Tibial artery (tissue), 4 donors: ENCODE measurements at regions of chrX and their contacts with region 1.

Region 1: DNA sequence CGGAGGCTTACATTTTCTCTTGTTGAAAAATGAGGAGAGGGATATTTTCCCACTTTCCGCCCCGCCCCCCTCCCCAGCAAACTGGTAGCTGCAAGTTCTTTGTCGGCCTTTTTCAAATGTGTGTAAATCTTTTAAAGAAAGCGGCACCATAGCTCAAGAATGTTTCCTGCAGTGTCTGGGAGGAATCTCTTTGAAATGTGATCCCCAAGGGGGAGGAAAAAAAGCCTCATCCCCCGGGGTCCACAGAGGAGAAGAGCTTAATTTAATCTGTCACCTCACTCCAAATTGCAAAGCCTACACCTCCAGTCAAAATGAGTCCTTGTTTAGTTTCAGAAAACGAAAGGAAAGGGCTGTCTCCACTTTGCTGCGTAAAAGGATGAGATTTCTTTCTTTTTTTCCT is 34.8 kb downstream of the ASMT start:
- DNase-seq: no peak
- H3K4me3 ChIP-seq: no peak overlapping the region
- H3K27ac ChIP-seq: no peak overlapping the region
- H3K4me1 ChIP-seq: no peaks in the 10 kb centered on the region
- H3K27me3 ChIP-seq: peaks cover 0 to 12% of the 10 kb centered on the region in 2 donors
- CTCF ChIP-seq: no peak

Region 2: DNA sequence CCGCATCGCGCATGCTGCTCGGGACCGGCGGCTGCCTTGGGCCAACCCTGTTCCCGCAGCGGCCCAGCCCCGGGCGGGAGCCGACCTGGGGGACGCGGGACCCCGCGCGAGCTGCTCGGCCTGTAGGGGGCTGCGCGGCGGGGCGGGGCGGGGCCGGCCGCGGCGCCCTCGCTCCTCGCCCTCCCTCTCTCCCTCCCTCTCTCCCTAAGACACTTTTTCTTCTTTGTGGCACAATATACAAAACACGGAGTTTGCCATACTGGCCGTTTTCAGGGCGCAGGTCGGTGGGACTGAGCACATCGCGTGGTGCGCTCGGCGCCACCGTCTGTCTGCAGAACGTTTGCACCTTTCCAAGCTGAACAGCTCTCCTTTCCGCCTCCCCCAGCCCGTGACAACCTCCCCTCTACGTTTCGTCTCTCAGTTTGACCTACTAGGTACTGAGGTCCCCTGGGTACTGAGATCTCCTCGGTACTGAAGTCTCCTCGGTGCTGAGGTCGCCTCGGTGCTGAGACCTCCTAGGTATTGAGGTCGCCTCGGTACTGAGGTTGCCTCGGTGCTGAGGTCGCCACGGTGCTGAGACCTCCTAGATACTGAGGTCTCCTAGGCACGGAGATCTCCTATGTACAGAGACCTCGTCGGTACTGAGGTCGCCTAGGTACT is 1629.6 kb before region 1 on chrX:
- intact Hi-C with region 1: no loop called
- DNase-seq: no peak
- H3K4me3 ChIP-seq: peak overlapping the region; percentile 28 to 49
- H3K27ac ChIP-seq: no peak overlapping the region
- H3K4me1 ChIP-seq: no peaks in the 10 kb centered on the region
- H3K27me3 ChIP-seq: no peaks in the 10 kb centered on the region
- CTCF ChIP-seq: no peak

Region 3: GRCh38 chrX:2589186-2590030 is 939.8 kb after region 1 on chrX:
- intact Hi-C with region 1: loop called (anchors 5 kb)
- DNase-seq: peak in 1 of 2 donors; percentile 50
- H3K4me3 ChIP-seq: no peak overlapping the region
- H3K27ac ChIP-seq: no peak overlapping the region
- H3K4me1 ChIP-seq: peaks cover 0 to 3% (median 0%) of the 10 kb centered on the region in 4 donors
- H3K27me3 ChIP-seq: peaks cover 0 to 18% of the 10 kb centered on the region in 2 donors
- CTCF ChIP-seq: no peak